ENCODE measurements at regions of chr19 and their contacts with region 1.

Region 1: DNA sequence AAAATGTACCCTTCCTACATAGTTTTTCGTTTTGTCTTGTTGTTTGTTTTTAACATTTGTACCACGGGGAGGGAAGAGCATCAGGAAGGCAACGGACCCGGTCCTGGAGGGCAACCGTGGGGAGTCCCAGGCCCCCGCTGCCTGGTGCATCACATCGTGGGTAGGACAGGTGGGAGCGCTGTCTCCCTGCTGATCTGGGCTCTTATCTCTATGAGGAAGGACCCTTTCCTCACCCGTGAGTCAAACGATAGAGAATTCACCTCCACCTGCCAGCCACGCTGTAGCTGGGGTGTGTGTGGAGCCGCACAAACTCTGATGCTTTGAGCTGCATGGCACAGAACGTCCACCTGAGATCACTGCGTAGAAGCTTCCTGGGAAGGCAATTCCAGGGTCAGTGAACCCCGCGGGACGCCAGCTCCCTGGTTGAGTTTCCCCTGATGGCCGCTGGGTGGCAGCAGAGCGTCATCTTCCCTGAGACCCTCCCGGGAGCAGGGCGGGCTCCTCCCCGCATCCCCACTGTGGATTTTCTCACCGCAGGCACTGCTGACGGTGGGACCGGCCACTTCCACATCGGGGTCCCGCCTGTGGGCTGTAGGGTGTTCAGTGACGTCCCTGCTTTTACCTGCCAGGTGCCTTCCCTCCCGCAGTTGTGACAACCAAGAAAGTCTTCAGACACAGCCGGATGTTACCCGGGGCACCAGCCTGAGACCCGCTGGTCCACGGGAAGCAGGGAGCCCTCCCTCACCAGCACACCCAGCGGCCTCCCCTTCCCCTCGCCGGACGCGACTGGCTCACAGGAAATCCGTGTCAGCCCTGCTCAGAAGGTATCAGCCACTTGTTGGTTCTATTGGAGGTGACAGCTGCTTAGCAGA is 54.7 kb downstream of the ZNF787 start:
- DNase-seq: peak; percentile 26 to 80 (median 65)
- ATAC-seq: peak; percentile 77
- H3K4me3 ChIP-seq: peak overlapping the region; percentile 13 to 25
- H3K4me3 Mint-ChIP-seq: peak overlapping the region; percentile 71
- H3K27ac ChIP-seq: no peak overlapping the region
- H3K27ac Mint-ChIP-seq: peak overlapping the region; percentile 37
- H3K4me1 ChIP-seq: peaks cover 6% of the 10 kb centered on the region
- H3K4me1 Mint-ChIP-seq: peaks cover 13% of the 10 kb centered on the region
- H3K27me3 ChIP-seq: peaks cover 4 to 8% of the 10 kb centered on the region in 2 experiments
- H3K27me3 Mint-ChIP-seq: peaks cover 33% of the 10 kb centered on the region
- CTCF ChIP-seq: peak; percentile 89

Region 2: GRCh38 chr19:56080669-56081401 is 14.4 kb after region 1 on chr19:
- CTCF ChIA-PET with region 1: interaction called, 33 read pairs
- POLR2A ChIA-PET with region 1: no interaction called
- intact Hi-C with region 1: no loop called
- DNase-seq: peak; percentile 46 to 77 (median 67)
- ATAC-seq: peak; percentile 67
- H3K4me3 ChIP-seq: peak overlapping the region; percentile 41 to 46
- H3K4me3 Mint-ChIP-seq: peak overlapping the region; percentile 76
- H3K27ac ChIP-seq: no peak overlapping the region
- H3K27ac Mint-ChIP-seq: no peak overlapping the region
- H3K4me1 ChIP-seq: peaks cover 8% of the 10 kb centered on the region
- H3K4me1 Mint-ChIP-seq: peaks cover 9% of the 10 kb centered on the region
- H3K27me3 ChIP-seq: no peaks in the 10 kb centered on the region
- H3K27me3 Mint-ChIP-seq: peaks cover 12% of the 10 kb centered on the region
- CTCF ChIP-seq: no peak

Region 3: DNA sequence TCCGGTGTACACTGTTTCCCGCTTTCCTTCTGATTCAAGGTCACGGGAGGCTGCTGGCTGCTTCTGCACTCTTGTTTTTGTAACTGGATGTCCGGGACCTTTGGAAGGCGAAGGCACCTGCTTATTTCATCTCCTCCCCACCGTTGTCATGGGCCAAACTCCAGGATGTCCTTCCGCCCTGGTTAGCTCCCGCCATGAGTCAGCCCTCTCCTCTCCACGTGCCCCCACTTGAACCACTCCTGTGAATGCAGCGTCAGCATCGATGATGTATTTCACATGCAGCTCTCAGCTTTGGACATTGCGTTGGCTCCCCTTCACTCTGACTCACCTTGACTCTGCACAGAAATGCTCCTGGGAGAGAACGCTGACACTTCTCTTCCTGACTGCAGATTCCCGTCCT is 103.9 kb after region 1 on chr19:
- CTCF ChIA-PET with region 1: interaction called, 37 read pairs
- POLR2A ChIA-PET with region 1: no interaction called
- intact Hi-C with region 1: loop called in 1 of 2 experiments (anchors 1 kb)
- DNase-seq: no peak
- ATAC-seq: no peak
- H3K4me3 ChIP-seq: no peak overlapping the region
- H3K4me3 Mint-ChIP-seq: no peak overlapping the region
- H3K27ac ChIP-seq: no peak overlapping the region
- H3K27ac Mint-ChIP-seq: no peak overlapping the region
- H3K4me1 ChIP-seq: no peaks in the 10 kb centered on the region
- H3K4me1 Mint-ChIP-seq: peaks cover 2% of the 10 kb centered on the region
- H3K27me3 ChIP-seq: no peaks in the 10 kb centered on the region
- H3K27me3 Mint-ChIP-seq: peaks cover 8% of the 10 kb centered on the region
- CTCF ChIP-seq: no peak

Region 4: GRCh38 chr19:56177564-56178243 is 111.3 kb after region 1 on chr19:
- CTCF ChIA-PET with region 1: interaction called, 37 read pairs
- POLR2A ChIA-PET with region 1: no interaction called
- intact Hi-C with region 1: loop called in 1 of 2 experiments (anchors 1 kb)
- DNase-seq: no peak
- ATAC-seq: no peak
- H3K4me3 ChIP-seq: no peak overlapping the region
- H3K4me3 Mint-ChIP-seq: no peak overlapping the region
- H3K27ac ChIP-seq: no peak overlapping the region
- H3K27ac Mint-ChIP-seq: no peak overlapping the region
- H3K4me1 ChIP-seq: no peaks in the 10 kb centered on the region
- H3K4me1 Mint-ChIP-seq: no peaks in the 10 kb centered on the region
- H3K27me3 ChIP-seq: no peaks in the 10 kb centered on the region
- H3K27me3 Mint-ChIP-seq: peaks cover 6% of the 10 kb centered on the region
- CTCF ChIP-seq: no peak

Region 5: DNA sequence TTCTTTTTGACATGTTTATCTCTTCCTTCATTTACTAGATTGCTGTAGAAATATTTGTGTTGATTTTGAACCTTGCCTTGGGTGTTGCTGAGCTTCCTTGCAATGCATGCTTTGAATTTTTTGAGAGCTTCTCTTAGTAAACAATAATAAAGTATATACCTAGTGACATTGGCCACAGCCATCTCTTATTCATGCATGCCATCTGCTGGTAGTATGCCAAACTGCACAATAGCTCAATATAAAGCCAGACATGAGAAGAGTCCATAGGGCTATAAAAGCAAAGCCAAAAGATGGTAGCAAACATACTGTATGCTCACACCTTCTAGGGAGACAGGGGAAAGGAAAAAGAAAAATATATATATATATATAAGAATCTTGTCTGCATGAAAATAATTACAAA is 267.1 kb after region 1 on chr19:
- CTCF ChIA-PET with region 1: interaction called, 19 read pairs
- POLR2A ChIA-PET with region 1: interaction called, 3 read pairs
- intact Hi-C with region 1: loop called (anchors 1 to 5 kb)
- DNase-seq: peak in 6 of 9 experiments; percentile 9 to 69 (median 42)
- ATAC-seq: peak; percentile 54
- H3K4me3 ChIP-seq: no peak overlapping the region
- H3K4me3 Mint-ChIP-seq: no peak overlapping the region
- H3K27ac ChIP-seq: no peak overlapping the region
- H3K27ac Mint-ChIP-seq: no peak overlapping the region
- H3K4me1 ChIP-seq: no peaks in the 10 kb centered on the region
- H3K4me1 Mint-ChIP-seq: no peaks in the 10 kb centered on the region
- H3K27me3 ChIP-seq: no peaks in the 10 kb centered on the region
- H3K27me3 Mint-ChIP-seq: peaks cover 3% of the 10 kb centered on the region
- CTCF ChIP-seq: peak; percentile 64

Region 6: DNA sequence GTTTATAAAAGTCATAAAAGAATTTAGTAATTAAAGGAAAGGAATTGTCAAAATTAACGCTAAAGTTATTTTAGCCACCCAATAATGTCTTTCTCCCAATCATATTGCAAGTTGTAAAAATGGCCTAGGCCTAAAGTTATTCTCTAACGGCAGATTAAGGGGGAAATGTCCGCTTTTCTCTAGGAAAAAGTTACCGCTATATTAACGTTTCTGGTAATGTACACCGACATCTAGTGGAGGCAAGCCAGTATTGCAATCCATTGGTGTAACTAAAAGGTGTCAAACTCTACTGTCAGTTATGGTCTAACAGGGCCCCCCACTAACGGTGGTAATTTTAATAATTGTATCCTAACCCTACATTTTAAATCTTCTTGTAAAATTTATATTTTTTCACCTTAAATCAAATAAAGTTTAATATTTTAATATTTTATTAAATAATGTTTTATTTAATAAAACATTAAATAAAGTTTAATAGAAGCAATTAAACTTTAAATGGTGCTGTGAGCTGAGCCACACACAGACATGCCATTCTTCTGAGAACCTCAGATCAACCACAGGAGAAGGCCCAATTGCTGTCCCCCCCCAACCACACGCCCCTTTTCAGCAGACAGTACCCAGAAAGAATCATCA is 284.1 kb after region 1 on chr19:
- CTCF ChIA-PET with region 1: interaction called, 11 read pairs
- POLR2A ChIA-PET with region 1: no interaction called
- intact Hi-C with region 1: loop called (anchors 1 to 5 kb)
- DNase-seq: peak in 8 of 9 experiments; percentile 14 to 71 (median 55)
- ATAC-seq: peak; percentile 68
- H3K4me3 ChIP-seq: no peak overlapping the region
- H3K4me3 Mint-ChIP-seq: no peak overlapping the region
- H3K27ac ChIP-seq: no peak overlapping the region
- H3K27ac Mint-ChIP-seq: no peak overlapping the region
- H3K4me1 ChIP-seq: no peaks in the 10 kb centered on the region
- H3K4me1 Mint-ChIP-seq: peaks cover 2% of the 10 kb centered on the region
- H3K27me3 ChIP-seq: no peaks in the 10 kb centered on the region
- H3K27me3 Mint-ChIP-seq: no peaks in the 10 kb centered on the region
- CTCF ChIP-seq: peak; percentile 96

Region 7: GRCh38 chr19:56660381-56661107 is 594.2 kb after region 1 on chr19:
- CTCF ChIA-PET with region 1: no interaction called
- POLR2A ChIA-PET with region 1: no interaction called
- intact Hi-C with region 1: no loop called
- DNase-seq: no peak
- ATAC-seq: no peak
- H3K4me3 ChIP-seq: no peak overlapping the region
- H3K4me3 Mint-ChIP-seq: no peak overlapping the region
- H3K27ac ChIP-seq: no peak overlapping the region
- H3K27ac Mint-ChIP-seq: no peak overlapping the region
- H3K4me1 ChIP-seq: no peaks in the 10 kb centered on the region
- H3K4me1 Mint-ChIP-seq: no peaks in the 10 kb centered on the region
- H3K27me3 ChIP-seq: no peaks in the 10 kb centered on the region
- H3K27me3 Mint-ChIP-seq: no peaks in the 10 kb centered on the region
- CTCF ChIP-seq: no peak